ENCODE measurements at regions of chr9 and their contacts with region 1.

Region 1: GRCh38 chr9:101418518-101419430 is 16.8 kb downstream of the ALDOB start:
- DNase-seq: no peak
- ATAC-seq: no peak
- H3K4me3 ChIP-seq: no peak overlapping the region
- H3K27ac ChIP-seq: no peak overlapping the region
- H3K4me1 ChIP-seq: no peaks in the 10 kb centered on the region
- H3K27me3 ChIP-seq: no peaks in the 10 kb centered on the region

Region 2: DNA sequence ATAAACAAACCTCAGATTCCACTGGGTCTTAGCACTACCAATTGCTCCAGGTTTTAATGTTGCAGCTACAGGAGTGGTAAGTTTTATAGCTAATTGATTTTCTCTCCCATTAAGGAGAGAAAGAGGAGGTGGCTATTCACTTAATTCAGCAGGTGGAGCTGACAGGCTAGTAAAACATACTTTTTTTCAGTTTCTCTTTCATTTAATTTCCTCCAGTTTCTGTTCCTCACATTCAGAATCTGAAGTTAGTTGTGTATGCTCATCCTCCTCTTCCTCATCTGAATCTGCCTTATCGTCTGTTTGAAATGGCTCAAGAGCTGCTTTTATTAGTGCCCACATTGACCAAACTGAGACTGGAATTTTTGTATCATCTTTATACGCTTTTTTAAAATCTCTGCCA is 292.2 kb before region 1 on chr9:
- intact Hi-C with region 1: no loop called
- DNase-seq: no peak
- ATAC-seq: no peak
- H3K4me3 ChIP-seq: no peak overlapping the region
- H3K27ac ChIP-seq: no peak overlapping the region
- H3K4me1 ChIP-seq: no peaks in the 10 kb centered on the region
- H3K27me3 ChIP-seq: no peaks in the 10 kb centered on the region

Region 3: GRCh38 chr9:101479338-101480030 is 60.7 kb after region 1 on chr9:
- intact Hi-C with region 1: loop called in 1 of 2 experiments (anchors 10 kb)
- DNase-seq: no peak
- ATAC-seq: no peak
- H3K4me3 ChIP-seq: no peak overlapping the region
- H3K27ac ChIP-seq: no peak overlapping the region
- H3K4me1 ChIP-seq: peaks cover 0 to 3% of the 10 kb centered on the region in 2 donors
- H3K27me3 ChIP-seq: no peaks in the 10 kb centered on the region